IMR-90 (cell line): ENCODE measurements at regions of chr9 and their contacts with region 1.

Region 1: GRCh38 chr9:76403352-76403751 is 9.1 kb upstream of the RFK start:
- DNase-seq: peak; percentile 85
- ATAC-seq: peak; percentile 84
- H3K4me3 ChIP-seq: no peak overlapping the region
- H3K27ac ChIP-seq: peak overlapping the region; percentile 26; the same call in 1 of the 2 replicates
- H3K4me1 ChIP-seq: peaks cover 7% of the 10 kb centered on the region
- H3K27me3 ChIP-seq: no peaks in the 10 kb centered on the region
- CTCF ChIP-seq: peak; percentile 69
- POLR2A ChIP-seq: no peak
- RAD21 ChIP-seq: peak; percentile 54

Region 2: GRCh38 chr9:76181020-76181641 is 222.2 kb before region 1 on chr9:
- CTCF ChIA-PET with region 1: no interaction called
- POLR2A ChIA-PET with region 1: no interaction called
- dilution Hi-C with region 1: no loop called
- in situ Hi-C with region 1: no loop called
- intact Hi-C with region 1: no loop called
- DNase-seq: peak; percentile 74
- ATAC-seq: peak; percentile 76
- H3K4me3 ChIP-seq: no peak overlapping the region
- H3K27ac ChIP-seq: peak overlapping the region; percentile 73
- H3K4me1 ChIP-seq: peaks cover 15% of the 10 kb centered on the region
- H3K27me3 ChIP-seq: no peaks in the 10 kb centered on the region
- CTCF ChIP-seq: no peak
- POLR2A ChIP-seq: no peak
- RAD21 ChIP-seq: no peak

Region 3: GRCh38 chr9:76451234-76451633 is 47.9 kb after region 1 on chr9:
- CTCF ChIA-PET with region 1: interaction called, 3 read pairs
- POLR2A ChIA-PET with region 1: no interaction called
- dilution Hi-C with region 1: no loop called
- in situ Hi-C with region 1: no loop called
- intact Hi-C with region 1: loop called (anchors 5 kb)
- DNase-seq: peak; percentile 85
- ATAC-seq: peak; percentile 53
- H3K4me3 ChIP-seq: no peak overlapping the region
- H3K27ac ChIP-seq: no peak overlapping the region
- H3K4me1 ChIP-seq: peaks cover 11% of the 10 kb centered on the region
- H3K27me3 ChIP-seq: no peaks in the 10 kb centered on the region
- CTCF ChIP-seq: no peak
- POLR2A ChIP-seq: no peak
- RAD21 ChIP-seq: no peak